Endothelial cell of umbilical vein (primary cell): ENCODE measurements at regions of chr19 and their contacts with region 1.

Region 1: GRCh38 chr19:35140962-35141637 is 2.0 kb upstream of the FXYD7 start:
- DNase-seq: peak; percentile 79
- H3K4me3 ChIP-seq: no peak overlapping the region
- H3K27ac ChIP-seq: no peak overlapping the region
- H3K4me1 ChIP-seq: peaks cover 11% of the 10 kb centered on the region
- H3K27me3 ChIP-seq: peaks cover 16 to 17% of the 10 kb centered on the region in 2 experiments
- CTCF ChIP-seq: peak; percentile 5 to 63
- POLR2A ChIP-seq: no peak

Region 2: DNA sequence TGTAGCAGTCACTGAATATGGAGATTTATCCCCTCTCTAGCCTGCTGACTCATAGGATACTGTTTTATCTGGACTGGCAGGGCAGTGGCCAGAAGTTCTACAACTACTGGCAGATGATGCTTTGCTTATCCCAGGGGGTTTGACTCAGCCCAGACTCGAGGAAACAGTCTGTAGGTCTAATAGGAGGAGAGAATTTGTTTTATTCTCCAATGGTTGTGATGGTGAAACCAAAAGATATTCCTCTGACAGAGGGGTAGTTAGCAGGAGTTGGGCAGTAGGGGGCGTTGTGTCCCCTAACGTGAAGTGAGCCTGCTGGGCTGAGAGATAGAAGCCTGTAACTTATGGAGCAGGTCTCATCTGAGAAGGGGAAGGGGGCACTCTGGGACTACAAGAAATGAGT is 584.6 kb before region 1 on chr19:
- CTCF ChIA-PET with region 1: no interaction called
- POLR2A ChIA-PET with region 1: no interaction called
- dilution Hi-C with region 1: no loop called
- intact Hi-C with region 1: no loop called
- DNase-seq: peak; percentile 8
- H3K4me3 ChIP-seq: no peak overlapping the region
- H3K27ac ChIP-seq: no peak overlapping the region
- H3K4me1 ChIP-seq: no peaks in the 10 kb centered on the region
- H3K27me3 ChIP-seq: peaks cover 1 to 3% of the 10 kb centered on the region in 2 experiments
- CTCF ChIP-seq: peak; percentile 48 to 53
- POLR2A ChIP-seq: no peak

Region 3: GRCh38 chr19:35013031-35013819 is 127.9 kb before region 1 on chr19:
- CTCF ChIA-PET with region 1: no interaction called
- POLR2A ChIA-PET with region 1: no interaction called
- dilution Hi-C with region 1: no loop called
- intact Hi-C with region 1: no loop called
- DNase-seq: peak; percentile 75
- H3K4me3 ChIP-seq: no peak overlapping the region
- H3K27ac ChIP-seq: peak overlapping the region; percentile 10
- H3K4me1 ChIP-seq: peaks cover 3% of the 10 kb centered on the region
- H3K27me3 ChIP-seq: no peaks in the 10 kb centered on the region
- CTCF ChIP-seq: peak; percentile 98 to 99
- POLR2A ChIP-seq: no peak

Region 4: GRCh38 chr19:35114353-35115176 is 26.5 kb before region 1 on chr19:
- CTCF ChIA-PET with region 1: interaction called, 20 read pairs
- POLR2A ChIA-PET with region 1: no interaction called
- dilution Hi-C with region 1: no loop called
- intact Hi-C with region 1: loop called (anchors 1 kb)
- DNase-seq: peak; percentile 60
- H3K4me3 ChIP-seq: no peak overlapping the region
- H3K27ac ChIP-seq: no peak overlapping the region
- H3K4me1 ChIP-seq: no peaks in the 10 kb centered on the region
- H3K27me3 ChIP-seq: no peaks in the 10 kb centered on the region
- CTCF ChIP-seq: peak; percentile 96 to 97
- POLR2A ChIP-seq: no peak

Region 5: DNA sequence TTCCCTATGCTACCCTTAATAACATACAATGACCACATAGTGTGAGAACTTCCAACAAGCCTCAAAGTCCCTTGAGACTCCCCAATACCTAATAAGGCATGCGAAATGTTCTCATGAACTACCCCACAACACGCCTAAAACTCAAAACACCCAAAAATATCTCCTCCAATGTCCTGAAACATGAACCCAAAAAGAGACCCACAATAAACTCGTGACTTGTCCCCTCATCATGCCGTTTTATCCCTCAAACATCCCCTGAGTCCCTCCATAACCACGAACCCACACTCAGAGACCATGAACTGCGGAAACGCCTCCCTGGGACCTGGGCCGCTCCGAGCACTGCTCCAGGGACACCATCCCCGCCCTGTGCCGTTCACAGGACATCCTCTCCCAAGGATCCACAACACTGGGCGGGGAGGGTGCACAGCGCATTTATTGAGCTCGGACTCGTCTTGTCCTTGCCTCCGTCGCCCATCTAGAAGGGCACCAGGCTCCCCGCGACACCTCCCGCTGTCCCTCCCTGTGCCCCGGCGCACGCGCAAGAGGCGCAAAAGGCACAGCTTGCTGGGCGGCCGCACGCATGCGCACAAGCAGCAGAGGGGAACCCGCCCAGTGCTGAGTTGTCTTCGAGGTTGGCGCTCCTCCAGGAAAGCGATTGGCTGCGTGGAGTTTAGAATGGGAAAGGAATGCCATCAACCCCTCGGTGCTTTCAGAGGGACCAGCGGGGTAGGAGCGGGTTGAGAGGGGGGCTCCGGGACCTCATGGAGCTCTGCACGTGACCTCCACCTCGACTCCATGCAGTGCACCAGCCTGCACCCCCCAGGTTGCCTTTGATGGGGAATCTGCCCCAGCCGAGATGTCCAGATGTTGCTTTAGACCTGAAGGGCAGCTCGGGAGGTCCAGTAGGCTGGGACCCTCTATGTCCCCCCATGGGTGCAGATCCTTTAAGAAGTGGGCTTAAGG is 16.7 kb before region 1 on chr19:
- CTCF ChIA-PET with region 1: interaction called, 16 read pairs
- POLR2A ChIA-PET with region 1: no interaction called
- dilution Hi-C with region 1: no loop called
- intact Hi-C with region 1: no loop called
- DNase-seq: peak; percentile 89
- H3K4me3 ChIP-seq: peak overlapping the region in 2 of 3 experiments; percentile 39 to 49
- H3K27ac ChIP-seq: no peak overlapping the region
- H3K4me1 ChIP-seq: peaks cover 3% of the 10 kb centered on the region
- H3K27me3 ChIP-seq: no peaks in the 10 kb centered on the region
- CTCF ChIP-seq: no peak
- POLR2A ChIP-seq: peak; percentile 63

Region 6: DNA sequence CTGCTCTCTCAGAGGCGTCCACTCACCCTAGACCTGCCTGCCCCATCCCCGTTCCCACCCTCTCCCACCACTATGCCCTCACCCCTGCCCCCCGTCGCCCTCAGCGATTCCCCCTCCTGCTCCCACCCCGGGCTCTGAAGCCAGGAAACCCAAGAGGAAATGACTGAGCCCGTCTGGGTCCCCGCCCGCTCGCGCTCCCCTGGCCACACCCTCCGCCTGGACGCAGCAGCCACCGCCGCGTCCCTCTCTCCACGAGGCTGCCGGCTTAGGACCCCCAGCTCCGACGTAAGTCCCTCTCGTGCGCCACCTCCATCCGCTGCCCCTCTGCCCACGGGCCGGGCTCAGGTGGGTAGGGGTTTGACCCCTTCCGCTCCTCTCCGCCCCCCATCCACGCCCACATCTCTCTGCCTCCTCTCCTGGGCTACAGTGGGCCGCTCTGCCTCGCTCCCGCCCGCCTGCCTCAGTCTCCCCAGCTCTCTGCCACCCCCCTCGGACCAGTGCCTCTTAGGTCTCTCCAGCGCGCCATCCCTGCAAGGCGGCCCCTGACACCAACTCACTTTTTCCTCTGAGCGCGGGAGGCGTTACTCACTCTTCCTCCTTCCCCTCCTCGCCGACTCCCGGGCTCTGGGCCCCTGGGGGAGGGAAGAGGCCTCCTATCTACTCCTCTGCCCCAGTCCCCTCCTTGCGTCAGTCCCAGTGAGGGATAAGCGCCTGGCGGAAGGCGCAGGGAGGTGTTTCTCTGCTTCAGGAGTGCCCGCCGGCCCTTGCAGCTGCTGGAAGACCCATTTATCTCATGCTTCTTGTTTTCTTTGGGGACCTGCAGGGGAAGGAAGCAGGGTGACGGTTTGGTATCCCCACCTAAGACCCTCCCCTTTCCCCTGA is 13.7 kb after region 1 on chr19 and contains the start of gene FXYD5:
- CTCF ChIA-PET with region 1: interaction called, 73 read pairs
- POLR2A ChIA-PET with region 1: no interaction called
- dilution Hi-C with region 1: no loop called
- intact Hi-C with region 1: loop called (anchors 1 kb)
- DNase-seq: peak; percentile 79
- H3K4me3 ChIP-seq: peak within 1 kb of the TSS; percentile 78 to 98 (median 82)
- H3K27ac ChIP-seq: peak within 1 kb of the TSS; percentile 95
- H3K4me1 ChIP-seq: peaks cover 20% of the 10 kb centered on the region
- H3K27me3 ChIP-seq: no peaks in the 10 kb centered on the region
- CTCF ChIP-seq: no peak
- POLR2A ChIP-seq: peak; percentile 77
- total RNA-seq, gene FXYD5: 219 and 223 TPM in 2 replicates

Region 7: GRCh38 chr19:35269421-35270117 is 128.5 kb after region 1 on chr19:
- CTCF ChIA-PET with region 1: interaction called, 21 read pairs
- POLR2A ChIA-PET with region 1: no interaction called
- dilution Hi-C with region 1: no loop called
- intact Hi-C with region 1: loop called (anchors 1 kb)
- DNase-seq: peak; percentile 71
- H3K4me3 ChIP-seq: peak overlapping the region in 2 of 3 experiments; percentile 52 to 53
- H3K27ac ChIP-seq: no peak overlapping the region
- H3K4me1 ChIP-seq: peaks cover 4% of the 10 kb centered on the region
- H3K27me3 ChIP-seq: no peaks in the 10 kb centered on the region
- CTCF ChIP-seq: peak; percentile 20 to 71
- POLR2A ChIP-seq: no peak